ENCODE measurements at regions of chrX and their contacts with region 1.

Region 1: DNA sequence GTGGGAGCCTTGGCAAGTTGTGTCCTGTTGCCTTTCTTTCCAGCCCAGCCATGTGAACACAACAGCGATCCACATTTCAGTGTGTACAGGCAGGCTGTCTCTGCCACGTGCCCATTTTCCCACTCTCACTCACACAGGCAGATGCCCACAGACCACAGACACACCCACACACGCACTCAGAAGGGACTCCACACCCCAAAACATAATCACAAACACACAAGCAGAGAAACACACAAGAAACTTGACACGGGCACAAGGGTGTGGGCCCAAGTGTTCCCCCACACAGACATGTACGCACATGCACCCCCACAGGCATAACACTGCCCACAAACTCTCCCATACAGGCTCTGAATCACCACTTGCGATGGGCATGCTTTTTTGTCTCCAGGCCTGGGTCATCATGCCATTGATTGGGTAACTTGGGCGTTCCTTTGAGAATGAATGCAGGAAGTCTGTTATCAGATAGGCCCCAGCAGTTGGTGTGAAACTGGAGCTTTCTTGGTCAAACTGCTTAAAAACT is 84.3 kb downstream of the NBDY start:
- DNase-seq: peak; percentile 11 to 75 (median 62)
- ATAC-seq: peak; percentile 87
- H3K4me3 ChIP-seq: peak overlapping the region; percentile 40
- H3K4me3 Mint-ChIP-seq: peak overlapping the region; percentile 63 to 85 (median 82)
- H3K27ac ChIP-seq: peak overlapping the region; percentile 72
- H3K27ac Mint-ChIP-seq: peak overlapping the region; percentile 85 to 99 (median 95)
- H3K4me1 ChIP-seq: peaks cover 14 to 30% of the 10 kb centered on the region in 2 donors
- H3K4me1 Mint-ChIP-seq: peaks cover 19 to 52% (median 44%) of the 10 kb centered on the region in 7 donors
- H3K27me3 ChIP-seq: no peaks in the 10 kb centered on the region
- H3K27me3 Mint-ChIP-seq: no peaks in the 10 kb centered on the region

Region 2: DNA sequence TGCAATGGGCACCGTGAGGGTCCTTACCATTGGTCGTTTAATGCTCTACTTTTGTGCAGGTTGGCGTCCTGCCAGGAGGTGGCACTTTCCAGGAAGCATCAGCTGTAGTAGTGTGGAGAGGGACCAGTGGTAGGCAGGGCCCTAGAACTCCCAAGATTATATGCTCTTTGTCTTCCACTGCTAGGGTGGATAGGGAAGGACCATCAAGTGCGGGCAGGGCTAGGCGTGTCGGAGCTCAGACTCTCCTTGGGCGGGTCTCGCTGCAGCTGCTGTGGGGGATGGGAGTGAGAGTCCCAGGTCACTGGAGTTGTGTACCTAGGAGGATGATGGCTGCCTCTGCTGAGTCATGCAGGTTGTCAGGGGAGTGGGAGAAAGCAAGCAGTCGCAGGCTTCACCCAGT is 446.5 kb before region 1 on chrX:
- CTCF ChIA-PET with region 1: no interaction called
- POLR2A ChIA-PET with region 1: no interaction called
- intact Hi-C with region 1: loop called in 1 of 2 experiments (anchors 5 kb)
- DNase-seq: no peak
- ATAC-seq: no peak
- H3K4me3 ChIP-seq: no peak overlapping the region
- H3K4me3 Mint-ChIP-seq: peak overlapping the region in 3 of 10 donors; percentile 21 to 53 (median 23)
- H3K27ac ChIP-seq: no peak overlapping the region
- H3K27ac Mint-ChIP-seq: peak overlapping the region in 7 of 9 donors; percentile 19 to 96 (median 47)
- H3K4me1 ChIP-seq: peaks cover 4 to 52% of the 10 kb centered on the region in 2 donors
- H3K4me1 Mint-ChIP-seq: peaks cover 19 to 64% (median 59%) of the 10 kb centered on the region in 7 donors
- H3K27me3 ChIP-seq: no peaks in the 10 kb centered on the region
- H3K27me3 Mint-ChIP-seq: no peaks in the 10 kb centered on the region

Region 3: GRCh38 chrX:56744996-56745395 is 68.4 kb before region 1 on chrX:
- CTCF ChIA-PET with region 1: no interaction called
- POLR2A ChIA-PET with region 1: no interaction called
- intact Hi-C with region 1: loop called in 1 of 2 experiments (anchors 10 kb)
- DNase-seq: no peak
- ATAC-seq: no peak
- H3K4me3 ChIP-seq: no peak overlapping the region
- H3K4me3 Mint-ChIP-seq: no peak overlapping the region
- H3K27ac ChIP-seq: no peak overlapping the region
- H3K27ac Mint-ChIP-seq: no peak overlapping the region
- H3K4me1 ChIP-seq: no peaks in the 10 kb centered on the region
- H3K4me1 Mint-ChIP-seq: peaks cover 14 to 69% (median 50%) of the 10 kb centered on the region in 7 donors
- H3K27me3 ChIP-seq: no peaks in the 10 kb centered on the region
- H3K27me3 Mint-ChIP-seq: no peaks in the 10 kb centered on the region

Region 4: DNA sequence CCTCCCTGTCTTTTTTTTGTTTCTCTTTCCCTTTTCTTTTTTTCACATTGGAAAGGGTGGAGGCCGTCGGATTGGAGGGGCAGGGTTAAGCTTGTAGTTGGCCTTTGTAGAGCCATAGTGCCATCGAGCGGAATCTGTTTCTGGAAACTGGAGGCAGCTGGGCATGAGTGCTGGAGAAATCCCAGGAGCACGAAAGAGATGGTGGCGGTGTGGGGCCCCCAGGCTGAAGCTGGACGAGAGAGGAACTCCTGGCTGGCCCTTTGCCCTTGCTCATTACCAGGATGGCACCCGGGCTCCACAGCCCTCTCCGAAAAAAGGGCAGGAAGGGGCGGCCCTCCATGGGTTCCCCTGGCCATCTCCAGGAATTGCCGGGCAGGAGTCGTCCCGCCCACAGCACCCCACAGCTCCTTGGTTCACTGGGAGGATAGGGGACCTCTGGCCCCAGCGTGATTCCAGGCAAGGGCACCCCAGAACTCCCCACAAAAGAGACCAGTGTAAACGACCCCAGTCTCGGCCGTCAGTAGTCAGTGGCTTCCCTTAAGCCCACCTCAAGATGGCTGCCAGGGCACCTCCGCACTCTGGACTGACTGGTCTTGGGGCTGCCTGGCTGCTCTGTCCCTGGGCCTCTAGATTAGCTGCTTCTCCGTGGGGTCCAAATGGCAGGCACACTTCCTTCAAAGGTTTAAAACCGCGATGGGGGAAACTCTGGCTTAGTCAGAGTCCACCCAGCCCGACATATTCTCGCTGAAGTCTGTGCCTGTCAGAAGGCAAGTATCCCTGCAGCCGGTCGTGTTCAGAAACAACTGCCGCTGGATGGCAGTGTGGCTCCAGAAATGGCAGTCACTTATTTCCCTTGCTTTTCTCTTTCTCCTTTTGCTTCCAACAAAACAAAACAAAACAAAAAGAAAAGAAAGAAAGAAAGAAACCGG is 10.2 kb before region 1 on chrX:
- CTCF ChIA-PET with region 1: no interaction called
- POLR2A ChIA-PET with region 1: no interaction called
- intact Hi-C with region 1: loop called (anchors 1 kb)
- DNase-seq: peak; percentile 22 to 84 (median 61)
- ATAC-seq: no peak
- H3K4me3 ChIP-seq: no peak overlapping the region
- H3K4me3 Mint-ChIP-seq: peak overlapping the region in 8 of 10 donors; percentile 21 to 97 (median 92)
- H3K27ac ChIP-seq: peak overlapping the region; percentile 52
- H3K27ac Mint-ChIP-seq: peak overlapping the region; percentile 18 to 96 (median 73)
- H3K4me1 ChIP-seq: peaks cover 21 to 26% of the 10 kb centered on the region in 2 donors
- H3K4me1 Mint-ChIP-seq: peaks cover 27 to 64% (median 44%) of the 10 kb centered on the region in 7 donors
- H3K27me3 ChIP-seq: no peaks in the 10 kb centered on the region
- H3K27me3 Mint-ChIP-seq: no peaks in the 10 kb centered on the region

Region 5: GRCh38 chrX:56995271-56995994 is 182.1 kb after region 1 on chrX and contains the start of gene SPIN3:
- CTCF ChIA-PET with region 1: no interaction called
- POLR2A ChIA-PET with region 1: interaction called, 3 read pairs
- intact Hi-C with region 1: loop called in 1 of 2 experiments (anchors 5 kb)
- DNase-seq: peak; percentile 15 to 67 (median 48)
- ATAC-seq: peak; percentile 81
- H3K4me3 ChIP-seq: peak within 1 kb of the TSS; percentile 50
- H3K4me3 Mint-ChIP-seq: peak within 1 kb of the TSS; percentile 91 to 98 (median 95)
- H3K27ac ChIP-seq: peak within 1 kb of the TSS; percentile 42
- H3K27ac Mint-ChIP-seq: peak within 1 kb of the TSS; percentile 90 to 97 (median 93)
- H3K4me1 ChIP-seq: peaks cover 0 to 4% of the 10 kb centered on the region in 2 donors
- H3K4me1 Mint-ChIP-seq: peaks cover 11 to 58% (median 38%) of the 10 kb centered on the region in 7 donors
- H3K27me3 ChIP-seq: no peaks in the 10 kb centered on the region
- H3K27me3 Mint-ChIP-seq: no peaks in the 10 kb centered on the region
- total RNA-seq, gene SPIN3: 8.8 to 24.2 (median 13.5) TPM

Region 6: GRCh38 chrX:57286507-57287251 is 473.3 kb after region 1 on chrX and contains the start of gene FAAH2:
- CTCF ChIA-PET with region 1: no interaction called
- POLR2A ChIA-PET with region 1: no interaction called
- intact Hi-C with region 1: loop called (anchors 10 kb)
- DNase-seq: peak; percentile 7 to 88 (median 66)
- ATAC-seq: peak; percentile 91
- H3K4me3 ChIP-seq: peak within 1 kb of the TSS; percentile 82
- H3K4me3 Mint-ChIP-seq: peak within 1 kb of the TSS; percentile 82 to 95 (median 92)
- H3K27ac ChIP-seq: peak within 1 kb of the TSS; percentile 88
- H3K27ac Mint-ChIP-seq: peak within 1 kb of the TSS; percentile 57 to 96 (median 95)
- H3K4me1 ChIP-seq: peaks cover 0 to 3% of the 10 kb centered on the region in 2 donors
- H3K4me1 Mint-ChIP-seq: peaks cover 5 to 57% (median 43%) of the 10 kb centered on the region in 7 donors
- H3K27me3 ChIP-seq: no peaks in the 10 kb centered on the region
- H3K27me3 Mint-ChIP-seq: no peaks in the 10 kb centered on the region
- total RNA-seq, gene FAAH2: 7.5 to 12.6 (median 9.7) TPM

Region 7: GRCh38 chrX:57906790-57907189 is 1093.4 kb after region 1 on chrX:
- CTCF ChIA-PET with region 1: no interaction called
- POLR2A ChIA-PET with region 1: no interaction called
- intact Hi-C with region 1: loop called in 1 of 2 experiments (anchors 5 kb)
- DNase-seq: no peak
- ATAC-seq: no peak
- H3K4me3 ChIP-seq: no peak overlapping the region
- H3K4me3 Mint-ChIP-seq: peak overlapping the region in 8 of 10 donors; percentile 5 to 80 (median 57)
- H3K27ac ChIP-seq: no peak overlapping the region
- H3K27ac Mint-ChIP-seq: peak overlapping the region in 3 of 9 donors; percentile 42 to 65 (median 64)
- H3K4me1 ChIP-seq: peaks cover 5 to 6% of the 10 kb centered on the region in 2 donors
- H3K4me1 Mint-ChIP-seq: peaks cover 7 to 47% (median 36%) of the 10 kb centered on the region in 7 donors
- H3K27me3 ChIP-seq: no peaks in the 10 kb centered on the region
- H3K27me3 Mint-ChIP-seq: no peaks in the 10 kb centered on the region

Measured in naive thymus-derived CD4-positive, alpha-beta T cell (primary cell).